ENCODE measurements at regions of chr7 and their contacts with region 1.

Region 1: DNA sequence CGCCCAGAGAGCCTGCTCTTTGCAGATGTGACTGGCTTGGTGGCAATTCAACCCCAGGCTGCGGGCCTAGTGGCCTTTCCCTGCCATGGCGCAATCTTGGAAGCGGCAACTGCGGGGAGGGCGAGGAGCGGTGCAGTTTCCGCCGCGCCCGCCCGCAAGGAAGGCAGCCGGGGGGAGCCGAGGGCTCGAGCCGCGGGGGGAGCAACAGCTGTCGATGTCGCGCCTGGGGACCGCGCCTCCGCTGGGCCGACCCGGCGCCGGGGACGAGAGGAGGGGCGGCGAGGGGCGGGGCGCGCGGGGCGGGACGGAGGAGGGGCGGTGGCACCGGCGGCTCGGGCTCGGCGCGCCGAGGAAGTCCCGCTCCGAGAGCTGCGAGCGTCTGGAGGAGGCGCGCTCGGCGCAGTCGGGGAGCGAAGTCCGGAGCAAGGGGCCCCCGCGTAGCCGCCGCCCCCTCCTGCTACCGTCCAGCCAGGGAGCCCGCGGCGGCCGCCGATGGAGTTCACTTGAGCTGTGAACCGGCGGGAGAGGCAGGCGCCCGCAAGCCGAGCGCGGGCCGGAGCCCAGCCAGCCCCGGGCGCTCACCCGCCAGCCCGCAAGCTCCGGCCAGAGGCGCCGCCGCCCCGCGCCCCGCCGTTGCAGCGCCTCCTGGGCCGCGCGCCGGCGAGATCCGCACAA is 438.1 kb upstream of the GALNT17 start:
- DNase-seq: peak; percentile 95
- H3K4me3 ChIP-seq: peak overlapping the region; percentile 80 to 90 (median 86)
- H3K27ac ChIP-seq: peak overlapping the region; percentile 86 to 87 (median 86)
- H3K4me1 ChIP-seq: peaks cover 7 to 42% (median 39%) of the 10 kb centered on the region in 4 donors
- H3K27me3 ChIP-seq: no peaks in the 10 kb centered on the region
- CTCF ChIP-seq: peak in 1 of 3 experiments; percentile 37
- EP300 ChIP-seq: no peak
- POLR2A ChIP-seq: no peak

Region 2: GRCh38 chr7:69598081-69598486 is 1095.7 kb before region 1 on chr7 and contains the start of gene AUTS2:
- intact Hi-C with region 1: loop called (anchors 10 kb)
- DNase-seq: peak; percentile 95
- H3K4me3 ChIP-seq: peak within 1 kb of the TSS; percentile 67 to 88 (median 88)
- H3K27ac ChIP-seq: peak within 1 kb of the TSS; percentile 93 to 94 (median 93)
- H3K4me1 ChIP-seq: peaks cover 19 to 47% (median 46%) of the 10 kb centered on the region in 4 donors
- H3K27me3 ChIP-seq: no peaks in the 10 kb centered on the region
- CTCF ChIP-seq: no peak
- EP300 ChIP-seq: no peak
- POLR2A ChIP-seq: no peak
- total RNA-seq, gene AUTS2: 18.5 to 44.9 (median 34.2) TPM

Region 3: GRCh38 chr7:69962186-69963065 is 731.4 kb before region 1 on chr7:
- intact Hi-C with region 1: loop called (anchors 10 kb)
- DNase-seq: no peak
- H3K4me3 ChIP-seq: peak overlapping the region in 1 of 4 donors; percentile 2
- H3K27ac ChIP-seq: peak overlapping the region; percentile 43 to 68 (median 66)
- H3K4me1 ChIP-seq: peaks cover 41 to 72% (median 62%) of the 10 kb centered on the region in 4 donors
- H3K27me3 ChIP-seq: no peaks in the 10 kb centered on the region
- CTCF ChIP-seq: no peak
- EP300 ChIP-seq: no peak
- POLR2A ChIP-seq: no peak

Region 4: DNA sequence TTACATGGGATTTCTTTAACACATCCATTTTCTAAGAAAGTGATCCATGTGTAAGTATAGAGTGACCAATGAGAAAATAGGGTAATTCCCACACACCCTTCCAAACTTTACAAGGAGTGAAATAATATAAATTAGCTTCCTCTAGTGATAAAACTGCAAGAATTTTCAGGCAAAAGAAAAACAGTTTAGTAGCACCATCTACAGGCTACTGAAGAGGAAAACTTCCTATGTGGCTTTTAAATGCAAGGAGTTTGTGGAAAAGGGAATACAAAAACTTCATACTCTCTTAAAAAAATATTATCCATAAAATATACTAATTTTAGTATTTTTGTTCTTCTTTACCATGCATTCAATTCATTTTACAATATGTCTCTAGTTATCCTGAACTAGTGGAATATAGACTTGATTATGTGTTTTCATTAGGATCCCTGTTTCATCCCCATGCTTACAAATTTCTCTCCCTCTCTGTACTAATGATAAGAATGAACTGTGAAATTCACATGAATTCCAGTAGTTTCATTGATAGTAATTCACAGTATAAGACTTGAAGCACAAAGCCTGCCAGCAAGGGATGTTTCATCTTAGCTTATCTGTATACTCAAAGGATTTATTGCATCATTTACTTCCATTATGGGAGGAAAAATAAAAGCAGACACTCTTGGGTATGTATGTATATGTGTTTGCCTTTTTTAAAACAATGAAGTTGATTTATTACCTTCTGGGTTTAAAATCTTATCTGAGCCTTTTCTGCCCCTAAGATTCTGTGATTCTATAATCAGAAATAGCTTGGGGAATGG is 652.7 kb before region 1 on chr7:
- intact Hi-C with region 1: loop called (anchors 5 kb)
- DNase-seq: no peak
- H3K4me3 ChIP-seq: no peak overlapping the region
- H3K27ac ChIP-seq: no peak overlapping the region
- H3K4me1 ChIP-seq: peaks cover 11 to 35% (median 23%) of the 10 kb centered on the region in 4 donors
- H3K27me3 ChIP-seq: no peaks in the 10 kb centered on the region
- CTCF ChIP-seq: peak; percentile 38 to 56 (median 55)
- EP300 ChIP-seq: no peak
- POLR2A ChIP-seq: no peak

Region 5: DNA sequence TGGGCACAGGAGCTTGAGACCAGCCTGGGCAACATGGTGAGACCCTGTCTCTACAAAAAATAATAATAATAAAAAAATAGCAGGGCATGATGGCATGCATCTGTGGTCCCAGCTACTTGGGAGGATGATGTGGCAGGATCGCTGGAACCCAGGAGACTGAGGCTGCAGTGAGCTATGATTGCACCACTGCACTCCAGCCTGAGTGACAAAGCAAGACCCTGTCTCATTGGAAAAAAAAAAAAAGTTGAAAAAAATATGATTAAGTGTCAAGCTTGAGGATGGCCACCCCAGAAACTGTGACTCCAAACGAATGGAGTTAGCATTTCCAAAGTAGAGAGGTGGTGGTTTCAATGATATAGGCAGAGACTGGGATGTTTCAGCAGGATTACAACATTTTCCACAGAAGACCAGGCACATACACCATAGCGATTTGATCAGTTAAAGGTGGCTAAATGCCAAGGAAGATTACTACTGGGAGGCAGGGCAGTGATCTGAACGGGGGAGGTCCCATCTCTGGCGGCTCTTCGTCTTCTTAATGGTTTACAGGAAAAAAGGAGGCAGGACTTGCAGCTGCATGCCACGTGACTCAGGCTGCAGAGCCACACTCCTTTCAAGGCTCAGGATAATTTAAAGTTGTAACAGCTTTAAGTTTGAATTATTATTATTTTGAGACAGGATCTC is 187.5 kb after region 1 on chr7:
- intact Hi-C with region 1: no loop called
- DNase-seq: no peak
- H3K4me3 ChIP-seq: no peak overlapping the region
- H3K27ac ChIP-seq: no peak overlapping the region
- H3K4me1 ChIP-seq: no peaks in the 10 kb centered on the region
- H3K27me3 ChIP-seq: peaks cover 0 to 16% (median 0%) of the 10 kb centered on the region in 4 donors
- CTCF ChIP-seq: no peak
- EP300 ChIP-seq: no peak
- POLR2A ChIP-seq: no peak